SK-N-SH (cell line): ENCODE measurements at regions of chr2 and their contacts with region 1.

Region 1: DNA sequence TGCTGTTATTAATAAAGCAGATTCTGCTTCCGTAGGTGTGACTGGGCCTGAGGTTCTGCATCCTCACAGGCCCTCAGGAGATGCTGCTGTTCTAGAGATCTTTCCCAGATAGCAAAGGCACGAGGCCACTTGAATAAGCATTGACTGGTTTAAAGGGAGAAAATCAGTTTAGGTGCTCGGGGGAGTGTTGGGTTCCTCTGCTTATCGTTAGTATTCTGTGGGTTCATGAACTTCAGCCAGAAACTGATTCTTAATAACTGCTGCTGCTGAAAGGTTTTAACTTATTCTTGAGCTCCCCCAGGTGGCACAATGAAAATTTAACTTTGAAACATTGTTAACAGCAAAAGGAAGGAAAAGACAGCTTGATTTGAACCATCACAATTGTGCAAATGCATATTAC is 56.9 kb downstream of the ITGA6 start:
- DNase-seq: peak; percentile 36
- H3K4me3 ChIP-seq: no peak overlapping the region
- H3K27ac ChIP-seq: no peak overlapping the region
- H3K4me1 ChIP-seq: peaks cover 0 to 6% of the 10 kb centered on the region in 2 experiments; a peak in 1 of 4 replicates
- H3K27me3 ChIP-seq: no peaks in the 10 kb centered on the region
- CTCF ChIP-seq: peak; percentile 55
- EP300 ChIP-seq: no peak
- RAD21 ChIP-seq: peak; percentile 72

Region 2: GRCh38 chr2:171852366-171852888 is 631.8 kb before region 1 on chr2:
- CTCF ChIA-PET with region 1: no interaction called
- POLR2A ChIA-PET with region 1: no interaction called
- DNase-seq: no peak
- H3K4me3 ChIP-seq: no peak overlapping the region
- H3K27ac ChIP-seq: no peak overlapping the region
- H3K4me1 ChIP-seq: no peaks in the 10 kb centered on the region; a peak in 1 of 4 replicates
- H3K27me3 ChIP-seq: no peaks in the 10 kb centered on the region
- CTCF ChIP-seq: no peak
- EP300 ChIP-seq: no peak
- RAD21 ChIP-seq: no peak

Region 3: DNA sequence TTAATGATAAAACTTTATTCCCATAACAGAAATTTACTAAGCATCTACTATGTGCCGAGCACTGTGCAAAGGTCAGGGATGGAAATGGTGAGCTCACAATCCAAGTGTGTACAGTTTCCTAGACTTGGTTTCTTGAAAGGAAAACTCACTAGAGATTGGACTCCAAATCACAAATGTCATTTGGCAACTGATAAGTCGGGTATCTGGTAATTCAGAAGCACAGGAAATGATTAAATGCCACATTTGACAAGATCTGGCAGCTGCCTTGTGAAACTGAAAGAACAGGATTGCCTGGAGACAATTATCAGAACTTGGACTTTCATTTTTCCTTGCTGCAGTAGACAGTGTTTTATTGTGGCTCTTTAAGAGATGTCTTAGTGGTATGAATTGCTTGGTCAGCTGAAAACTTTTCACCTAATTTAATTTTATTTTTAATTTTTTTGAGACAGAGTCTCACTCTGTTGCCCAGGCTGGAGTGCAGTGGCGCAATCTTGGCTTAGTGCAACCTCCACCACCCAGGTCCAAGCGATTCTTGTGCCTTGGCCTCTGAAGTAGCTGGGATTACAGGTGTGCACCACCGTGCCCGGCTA is 37.7 kb before region 1 on chr2:
- CTCF ChIA-PET with region 1: no interaction called
- POLR2A ChIA-PET with region 1: no interaction called
- DNase-seq: no peak
- H3K4me3 ChIP-seq: no peak overlapping the region
- H3K27ac ChIP-seq: peak overlapping the region in 1 of 2 experiments; percentile 21; a peak in 1 of 4 replicates
- H3K4me1 ChIP-seq: peaks cover 3 to 28% of the 10 kb centered on the region in 2 experiments; a peak in 3 of 4 replicates
- H3K27me3 ChIP-seq: no peaks in the 10 kb centered on the region
- CTCF ChIP-seq: no peak
- EP300 ChIP-seq: peak in 1 of 2 experiments; percentile 47; a peak in 1 of 4 replicates
- RAD21 ChIP-seq: no peak

Region 4: DNA sequence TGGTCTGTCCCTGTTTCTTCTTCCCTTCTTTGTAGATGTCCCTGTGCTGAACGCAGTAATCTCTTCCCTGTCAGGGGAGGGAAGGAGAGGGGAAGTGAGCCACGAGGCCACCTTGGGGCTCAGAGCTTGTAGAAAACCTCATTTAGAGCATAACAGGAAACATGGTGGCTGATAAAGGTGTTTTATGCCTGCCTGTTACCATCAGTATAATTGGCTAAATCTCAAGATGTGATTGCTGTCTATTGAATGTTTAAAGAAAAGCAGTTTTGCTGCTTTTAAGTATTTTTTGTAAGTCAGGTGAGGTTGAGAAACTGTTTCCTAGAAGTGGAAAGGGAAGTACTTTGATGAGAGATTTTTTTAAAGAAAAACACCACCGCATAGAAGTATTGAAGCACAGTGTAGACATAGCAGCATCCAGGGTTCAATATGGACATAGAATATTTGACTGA is 11.9 kb after region 1 on chr2:
- CTCF ChIA-PET with region 1: interaction called, 20 read pairs
- POLR2A ChIA-PET with region 1: no interaction called
- DNase-seq: no peak
- H3K4me3 ChIP-seq: no peak overlapping the region
- H3K27ac ChIP-seq: no peak overlapping the region
- H3K4me1 ChIP-seq: no peaks in the 10 kb centered on the region
- H3K27me3 ChIP-seq: no peaks in the 10 kb centered on the region
- CTCF ChIP-seq: no peak
- EP300 ChIP-seq: no peak
- RAD21 ChIP-seq: no peak